Right cardiac atrium (tissue), 5 donors: ENCODE measurements at regions of chr1 and their contacts with region 1.

Region 1: DNA sequence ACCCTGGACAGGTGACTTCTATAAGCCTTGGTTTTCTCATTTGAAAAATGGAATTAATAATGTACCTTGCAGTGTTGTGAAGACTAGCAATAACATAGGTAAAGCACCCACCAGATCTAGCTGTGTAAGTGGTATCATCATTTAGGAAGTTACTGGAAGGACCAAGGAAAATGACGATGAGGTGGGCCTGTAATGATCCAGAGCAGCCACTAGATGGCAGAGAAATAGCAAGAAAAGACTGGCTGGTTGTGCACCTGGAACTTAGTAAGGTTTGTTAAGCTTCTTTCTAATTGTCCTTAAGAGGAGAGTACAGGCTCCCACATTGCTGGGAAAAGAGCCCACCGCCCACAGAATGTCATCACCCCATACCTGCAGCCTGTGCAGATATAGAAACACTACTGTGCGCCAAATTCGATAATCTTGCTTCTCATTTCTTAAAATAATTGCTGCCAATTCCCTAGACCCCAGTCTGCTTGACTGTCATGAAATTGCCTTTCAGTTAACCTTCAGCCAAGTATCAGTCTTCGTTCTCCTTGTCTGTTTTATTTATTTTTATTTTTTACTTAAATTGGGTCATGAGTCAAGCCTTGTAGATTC is 37.2 kb downstream of the WNT4 start:
- DNase-seq: peak in 1 of 3 donors; percentile 23
- ATAC-seq: peak in 1 of 2 donors; percentile 47
- H3K4me3 ChIP-seq: no peak overlapping the region
- H3K27ac ChIP-seq: no peak overlapping the region
- H3K4me1 ChIP-seq: peaks cover 5% of the 10 kb centered on the region
- H3K27me3 ChIP-seq: no peaks in the 10 kb centered on the region

Region 2: DNA sequence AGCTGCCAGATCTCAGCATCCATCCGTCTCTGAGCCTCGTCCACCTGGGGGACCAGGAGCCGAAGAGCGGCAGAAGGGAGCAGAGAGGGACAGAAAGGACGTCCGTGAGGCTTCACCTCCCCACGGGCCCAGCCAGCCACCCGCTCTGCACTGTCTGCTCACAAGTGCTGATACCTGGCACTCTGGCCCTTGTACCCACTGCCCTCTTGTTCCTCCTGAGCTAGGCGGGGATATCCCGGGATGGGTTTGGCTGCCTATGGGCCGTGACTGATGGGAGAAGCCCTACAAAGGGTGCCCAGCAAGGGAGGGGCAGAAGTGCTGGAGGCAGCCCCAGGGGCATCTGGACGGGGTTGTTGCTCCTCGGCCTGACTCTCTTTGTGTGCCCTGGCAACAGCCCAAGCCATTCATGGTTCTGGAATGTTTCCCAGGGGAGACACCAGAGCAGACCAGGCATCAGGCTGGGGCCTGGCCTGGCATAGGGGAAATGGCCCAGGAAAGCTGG is 236.0 kb before region 1 on chr1:
- intact Hi-C with region 1: no loop called
- DNase-seq: peak; percentile 84 to 91 (median 91)
- ATAC-seq: peak; percentile 59 to 63
- H3K4me3 ChIP-seq: no peak overlapping the region
- H3K27ac ChIP-seq: peak overlapping the region; percentile 42
- H3K4me1 ChIP-seq: no peaks in the 10 kb centered on the region
- H3K27me3 ChIP-seq: no peaks in the 10 kb centered on the region

Region 3: GRCh38 chr1:22052115-22053016 is 53.3 kb before region 1 on chr1 and contains the start of gene CDC42:
- intact Hi-C with region 1: no loop called
- DNase-seq: peak; percentile 98 to 99 (median 99)
- ATAC-seq: peak; percentile 97 to 98
- H3K4me3 ChIP-seq: peak within 1 kb of the TSS; percentile 97
- H3K27ac ChIP-seq: peak within 1 kb of the TSS; percentile 100
- H3K4me1 ChIP-seq: peaks cover 9% of the 10 kb centered on the region
- H3K27me3 ChIP-seq: no peaks in the 10 kb centered on the region
- total RNA-seq, gene CDC42: 121 to 178 (median 133) TPM

Region 4: DNA sequence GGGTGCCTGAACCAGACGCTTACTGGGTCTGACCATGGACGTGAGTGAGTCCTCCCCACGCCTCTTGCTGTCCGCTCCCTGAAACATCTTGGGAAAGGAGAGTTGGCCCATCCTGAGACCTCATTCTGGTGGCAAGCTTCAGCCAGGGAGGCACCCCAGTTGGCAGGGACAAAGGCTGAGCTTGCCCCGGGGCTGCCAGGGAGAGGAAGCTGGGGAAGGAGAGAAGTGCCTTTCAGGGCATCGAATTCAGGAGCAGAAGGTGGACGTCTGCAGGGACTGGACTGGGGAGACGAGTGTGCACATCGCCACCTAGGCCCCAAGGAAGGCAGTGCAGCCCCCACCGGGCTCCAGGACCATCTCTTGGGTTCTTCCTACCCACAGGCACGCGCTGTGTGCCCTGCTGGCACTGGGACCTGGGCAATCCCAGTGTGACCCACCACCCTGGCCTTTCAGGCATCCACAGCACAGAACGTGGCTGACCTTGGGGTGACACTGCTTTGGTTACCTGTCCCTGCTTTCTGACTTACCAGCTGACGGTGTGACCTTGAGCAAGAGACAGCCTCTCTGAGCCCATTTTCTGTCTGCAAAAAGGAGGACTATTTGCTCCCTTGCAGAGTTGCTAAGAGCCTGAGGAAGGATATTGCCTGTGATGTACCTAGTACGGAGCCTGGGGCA is 170.1 kb after region 1 on chr1:
- intact Hi-C with region 1: loop called (anchors 5 to 10 kb)
- DNase-seq: peak; percentile 40 to 73 (median 68)
- ATAC-seq: peak; percentile 70 to 84
- H3K4me3 ChIP-seq: no peak overlapping the region
- H3K27ac ChIP-seq: no peak overlapping the region
- H3K4me1 ChIP-seq: no peaks in the 10 kb centered on the region
- H3K27me3 ChIP-seq: no peaks in the 10 kb centered on the region

Region 5: DNA sequence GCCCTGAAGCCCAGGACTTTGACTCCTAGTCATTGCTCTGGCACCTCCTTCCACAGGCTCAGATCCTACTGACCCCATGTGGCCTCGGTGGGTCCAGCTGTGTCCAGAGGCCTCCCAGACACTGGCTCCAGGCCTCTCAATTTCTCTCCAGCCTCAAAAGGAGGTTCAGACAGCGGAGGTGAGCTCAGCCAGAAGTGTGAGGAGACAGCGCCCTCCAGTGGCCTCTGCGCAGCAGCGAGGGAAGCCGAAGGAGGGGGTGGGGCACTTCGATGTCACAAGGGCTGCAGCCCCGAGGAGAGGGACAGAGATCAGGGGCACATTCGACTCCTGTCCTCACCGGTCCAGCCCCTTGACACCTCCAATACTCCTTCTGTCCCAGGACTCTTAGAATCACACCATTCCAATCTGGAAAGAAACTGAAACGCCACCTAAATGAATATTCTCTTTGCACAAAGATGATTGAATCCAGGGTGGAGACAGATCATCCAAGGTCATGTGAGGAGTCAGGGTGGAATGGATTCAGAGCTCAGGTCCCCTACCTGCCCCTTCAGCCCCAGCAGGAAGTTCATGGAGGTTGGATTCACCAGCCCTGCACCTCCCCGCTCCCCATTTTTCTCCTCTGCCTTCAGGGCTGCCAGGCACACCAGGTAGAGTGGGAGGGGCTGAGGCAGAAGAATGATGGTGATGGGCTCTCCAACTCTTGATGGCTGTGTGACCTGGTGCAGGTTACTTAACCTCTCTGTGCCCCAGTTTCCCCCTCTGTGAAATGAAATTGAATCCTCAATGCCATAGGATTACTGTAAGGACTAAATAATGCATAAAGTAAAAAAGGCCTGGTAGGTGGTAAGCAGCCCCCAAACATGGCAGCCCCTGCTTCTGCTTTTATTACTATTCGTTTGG is 311.1 kb after region 1 on chr1:
- intact Hi-C with region 1: loop called in 2 of 4 experiments (anchors 5 to 10 kb)
- DNase-seq: peak; percentile 58 to 84 (median 84)
- ATAC-seq: peak; percentile 39 to 49
- H3K4me3 ChIP-seq: no peak overlapping the region
- H3K27ac ChIP-seq: no peak overlapping the region
- H3K4me1 ChIP-seq: peaks cover 4% of the 10 kb centered on the region
- H3K27me3 ChIP-seq: no peaks in the 10 kb centered on the region